ENCODE measurements at regions of chr17 and their contacts with region 1.

Region 1: GRCh38 chr17:74852237-74853047 is 7.2 kb downstream of the GRIN2C start:
- DNase-seq: peak; percentile 89
- ATAC-seq: peak; percentile 90
- H3K4me3 Mint-ChIP-seq: peak overlapping the region; percentile 79
- H3K27ac Mint-ChIP-seq: no peak overlapping the region
- H3K4me1 Mint-ChIP-seq: peaks cover 9% of the 10 kb centered on the region
- H3K27me3 Mint-ChIP-seq: peaks cover 91% of the 10 kb centered on the region
- CTCF ChIP-seq: no peak

Region 2: DNA sequence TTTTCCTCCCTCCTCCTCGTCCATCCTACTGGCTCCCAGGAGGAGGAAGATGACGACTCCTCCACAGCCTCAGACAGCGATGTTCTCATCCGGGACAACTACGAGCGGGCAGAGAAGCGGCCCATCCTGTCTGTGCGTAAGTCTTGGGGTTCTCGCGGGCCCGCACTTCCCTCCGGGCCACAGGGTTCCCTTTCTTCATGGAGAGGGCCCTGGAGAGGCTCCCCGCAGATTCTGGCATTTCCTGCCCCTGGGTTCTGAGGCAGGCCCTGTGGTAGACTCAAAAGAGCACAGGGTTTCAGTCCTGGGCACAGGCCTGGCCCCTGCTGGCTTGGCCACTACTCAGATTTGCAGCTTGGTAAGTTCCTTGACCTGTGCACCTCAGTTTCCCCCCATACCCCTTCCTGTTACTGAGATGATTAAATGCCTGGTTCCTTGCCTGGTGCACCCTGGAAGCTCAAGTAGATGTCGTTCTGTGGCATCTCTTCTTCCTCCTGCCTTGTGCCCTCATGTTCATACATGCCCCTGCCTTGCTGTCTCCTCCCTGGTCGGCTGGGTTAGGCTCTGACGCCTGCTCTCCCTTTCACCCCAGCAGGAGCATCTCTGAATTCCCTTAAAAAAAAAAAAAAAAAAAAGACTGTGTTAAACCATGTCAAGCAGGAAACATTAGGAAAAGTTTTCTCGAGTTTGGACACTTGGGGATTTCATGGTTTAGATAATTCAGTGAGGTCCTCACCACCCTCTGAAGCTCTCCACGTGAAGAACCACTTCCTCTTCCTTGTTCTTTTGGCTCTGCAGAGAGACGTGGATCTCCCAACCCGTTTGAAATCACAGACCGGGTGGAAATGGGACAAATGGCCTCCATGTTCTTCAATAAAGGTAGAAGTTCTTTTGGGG is 62.0 kb before region 1 on chr17:
- CTCF ChIA-PET with region 1: interaction called, 10 read pairs
- POLR2A ChIA-PET with region 1: no interaction called
- DNase-seq: no peak
- ATAC-seq: no peak
- H3K4me3 Mint-ChIP-seq: no peak overlapping the region
- H3K27ac Mint-ChIP-seq: peak overlapping the region; percentile 80; the same call in 1 of the 2 replicates
- H3K4me1 Mint-ChIP-seq: peaks cover 6% of the 10 kb centered on the region
- H3K27me3 Mint-ChIP-seq: no peaks in the 10 kb centered on the region
- CTCF ChIP-seq: no peak

Region 3: DNA sequence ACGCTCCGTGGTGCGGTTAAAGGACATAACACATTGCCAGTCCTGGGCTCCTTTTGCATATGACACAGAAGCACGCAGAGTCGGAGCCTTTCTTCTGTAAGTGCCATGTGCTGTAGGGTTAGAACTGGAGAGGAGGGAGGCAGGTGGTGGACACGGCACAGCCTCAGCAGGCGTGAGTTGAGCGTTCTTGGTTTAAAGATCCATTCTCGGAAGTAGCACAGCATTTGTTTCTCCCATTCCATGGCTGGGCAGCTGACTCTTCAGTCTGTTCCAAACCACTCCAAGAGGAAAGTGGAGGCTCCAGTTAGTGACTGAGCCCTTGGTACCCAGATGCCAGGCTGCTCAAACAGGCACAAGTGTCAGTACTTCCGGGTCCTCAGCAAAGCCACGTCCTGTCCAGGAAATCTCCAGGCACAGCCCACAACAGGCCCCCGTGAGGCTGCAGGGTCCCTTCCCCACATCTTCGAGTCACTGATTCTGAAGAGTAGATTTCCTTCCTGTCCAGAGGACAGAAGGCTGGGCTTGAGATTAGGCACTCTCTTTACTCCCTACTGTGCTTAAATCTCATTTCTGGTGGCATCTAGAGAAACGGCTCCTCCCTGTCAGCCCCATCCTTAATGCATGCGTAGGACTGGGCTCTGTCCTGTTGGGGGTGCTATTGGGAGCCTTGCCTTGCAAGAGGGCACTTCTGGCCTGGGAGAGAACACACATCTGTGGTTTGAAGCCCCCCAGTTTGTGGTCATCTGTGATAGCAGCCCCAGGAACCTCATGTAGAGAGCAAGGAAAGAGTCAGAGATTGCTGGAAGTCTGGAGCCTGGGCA is 36.7 kb before region 1 on chr17:
- CTCF ChIA-PET with region 1: interaction called, 11 read pairs
- POLR2A ChIA-PET with region 1: no interaction called
- DNase-seq: peak; percentile 72
- ATAC-seq: peak; percentile 88
- H3K4me3 Mint-ChIP-seq: no peak overlapping the region
- H3K27ac Mint-ChIP-seq: no peak overlapping the region
- H3K4me1 Mint-ChIP-seq: peaks cover 8% of the 10 kb centered on the region
- H3K27me3 Mint-ChIP-seq: peaks cover 2% of the 10 kb centered on the region; the same call in 1 of the 2 replicates
- CTCF ChIP-seq: peak; percentile 36; the same call in 1 of the 2 replicates

Region 4: GRCh38 chr17:74827800-74828199 is 24.6 kb before region 1 on chr17:
- CTCF ChIA-PET with region 1: no interaction called
- POLR2A ChIA-PET with region 1: no interaction called
- DNase-seq: no peak
- ATAC-seq: no peak
- H3K4me3 Mint-ChIP-seq: no peak overlapping the region
- H3K27ac Mint-ChIP-seq: no peak overlapping the region
- H3K4me1 Mint-ChIP-seq: no peaks in the 10 kb centered on the region
- H3K27me3 Mint-ChIP-seq: no peaks in the 10 kb centered on the region
- CTCF ChIP-seq: no peak

Region 5: GRCh38 chr17:74873038-74873873 is 20.8 kb after region 1 on chr17:
- CTCF ChIA-PET with region 1: interaction called, 347 read pairs
- POLR2A ChIA-PET with region 1: interaction called, 7 read pairs
- DNase-seq: peak; percentile 99
- ATAC-seq: peak; percentile 91
- H3K4me3 Mint-ChIP-seq: peak overlapping the region; percentile 81
- H3K27ac Mint-ChIP-seq: peak overlapping the region; percentile 98
- H3K4me1 Mint-ChIP-seq: peaks cover 22% of the 10 kb centered on the region
- H3K27me3 Mint-ChIP-seq: peaks cover 8% of the 10 kb centered on the region
- CTCF ChIP-seq: no peak